Mammary epithelial cell (primary cell): ENCODE measurements at regions of chr19 and their contacts with region 1.

Region 1: DNA sequence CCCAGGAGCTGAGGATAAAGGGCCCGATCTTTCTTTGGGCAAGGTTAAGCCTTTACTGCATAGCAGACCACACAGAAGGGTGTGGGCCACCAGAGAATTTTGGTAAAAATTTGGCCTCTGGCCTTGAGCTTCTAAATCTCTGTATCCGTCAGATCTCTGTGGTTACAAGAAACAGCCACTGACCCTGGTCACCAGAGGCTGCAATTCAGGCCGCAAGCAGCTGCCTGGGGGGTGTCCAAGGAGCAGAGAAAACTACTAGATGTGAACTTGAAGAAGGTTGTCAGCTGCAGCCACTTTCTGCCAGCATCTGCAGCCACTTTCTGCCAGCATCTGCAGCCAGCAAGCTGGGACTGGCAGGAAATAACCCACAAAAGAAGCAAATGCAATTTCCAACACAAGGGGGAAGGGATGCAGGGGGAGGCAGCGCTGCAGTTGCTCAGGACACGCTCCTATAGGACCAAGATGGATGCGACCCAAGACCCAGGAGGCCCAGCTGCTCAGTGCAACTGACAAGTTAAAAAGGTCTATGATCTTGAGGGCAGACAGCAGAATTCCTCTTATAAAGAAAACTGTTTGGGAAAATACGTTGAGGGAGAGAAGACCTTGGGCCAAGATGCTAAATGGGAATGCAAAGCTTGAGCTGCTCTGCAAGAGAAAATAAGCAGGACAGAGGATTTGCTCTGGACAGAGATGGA is 8.4 kb upstream of the CEACAM19 start:
- DNase-seq: no peak
- H3K4me3 ChIP-seq: no peak overlapping the region
- H3K27ac ChIP-seq: no peak overlapping the region
- H3K4me1 ChIP-seq: no peaks in the 10 kb centered on the region
- H3K27me3 ChIP-seq: no peaks in the 10 kb centered on the region
- CTCF ChIP-seq: no peak

Region 2: GRCh38 chr19:43950834-43951645 is 711.8 kb before region 1 on chr19 and contains the start of gene ZNF221:
- CTCF ChIA-PET with region 1: interaction called, 23 read pairs
- dilution Hi-C with region 1: no loop called
- in situ Hi-C with region 1: no loop called
- intact Hi-C with region 1: no loop called
- DNase-seq: peak; percentile 96
- H3K4me3 ChIP-seq: peak within 1 kb of the TSS; percentile 79 to 85 (median 84)
- H3K27ac ChIP-seq: peak within 1 kb of the TSS; percentile 5
- H3K4me1 ChIP-seq: no peaks in the 10 kb centered on the region
- H3K27me3 ChIP-seq: no peaks in the 10 kb centered on the region
- CTCF ChIP-seq: peak in 1 of 2 donors; percentile 44
- total RNA-seq, gene ZNF221: 4.1 to 9.3 TPM